Left cardiac atrium (tissue), 4 donors: ENCODE measurements at regions of chr7 and their contacts with region 1.

Region 1: DNA sequence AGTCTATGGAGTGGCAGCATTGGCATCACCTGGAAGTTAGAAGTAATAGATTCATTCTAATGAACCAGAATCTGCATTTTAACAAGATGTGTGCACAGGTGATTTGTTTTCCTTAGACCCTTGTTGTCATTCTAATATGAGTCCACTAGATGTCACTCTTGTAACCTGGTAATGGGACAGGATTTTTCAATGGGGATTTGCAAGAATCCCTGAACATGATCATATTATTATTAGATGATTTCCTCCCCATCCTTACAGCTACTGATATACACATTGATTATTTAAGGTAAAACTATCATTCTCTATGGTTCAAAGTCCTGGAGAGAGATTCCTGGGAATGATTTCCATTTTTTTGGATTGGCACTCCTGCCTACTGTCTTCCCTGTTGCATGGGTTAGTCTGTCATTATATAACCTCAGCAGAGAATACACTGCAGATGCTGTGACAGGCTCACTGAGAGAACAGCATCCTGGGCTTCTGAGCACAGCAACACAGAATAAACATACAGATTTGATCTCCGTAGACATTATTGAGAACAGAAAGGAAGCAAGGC is 194.9 kb downstream of the SUGCT start:
- DNase-seq: no peak
- ATAC-seq: no peak

Region 2: DNA sequence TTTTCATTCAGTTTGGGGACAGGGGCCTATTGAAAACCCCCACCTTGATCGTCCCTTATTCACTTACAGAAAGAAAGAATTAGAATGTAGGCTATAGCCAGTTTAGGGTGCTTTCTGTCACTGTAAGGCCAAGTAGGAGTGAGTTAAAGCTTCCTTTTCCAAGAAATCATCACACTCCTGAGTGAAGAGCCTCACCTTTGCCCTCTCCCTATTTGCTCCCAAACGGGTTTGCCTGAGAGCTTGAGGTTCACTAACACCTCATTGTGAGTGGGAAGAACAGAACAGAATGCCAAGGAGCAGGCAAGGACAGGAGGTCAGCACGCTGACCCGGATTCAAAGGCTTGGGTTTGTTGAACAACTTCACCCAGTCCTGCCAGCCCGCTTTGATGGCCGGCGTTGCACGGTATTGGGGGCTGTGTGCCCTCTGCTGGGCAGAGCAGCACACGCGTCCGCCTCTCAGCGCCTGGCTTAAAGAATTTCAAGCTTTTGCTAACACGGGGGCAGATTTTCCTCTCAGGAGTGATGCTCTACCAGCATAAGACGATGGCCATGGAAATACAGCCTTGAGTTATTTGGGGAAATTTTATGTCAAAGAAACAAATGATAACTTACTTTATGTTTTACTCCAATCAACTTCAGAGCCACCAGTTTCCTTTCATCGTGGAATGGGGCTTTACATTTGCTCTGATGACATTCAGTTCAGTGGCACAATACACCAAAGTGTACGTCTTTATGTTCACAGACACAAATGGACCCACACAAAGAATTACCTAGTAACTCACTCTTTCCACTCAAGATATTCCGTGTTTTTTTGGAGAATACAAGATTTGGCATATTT is 275.1 kb after region 1 on chr7:
- intact Hi-C with region 1: loop called in 1 of 2 experiments (anchors 5 kb)
- DNase-seq: peak; percentile 66
- ATAC-seq: peak; percentile 89 to 91

Region 3: GRCh38 chr7:41705109-41705901 is 1375.6 kb after region 1 on chr7:
- intact Hi-C with region 1: loop called in 1 of 2 experiments (anchors 5 kb)
- DNase-seq: peak; percentile 87
- ATAC-seq: peak; percentile 94